AG04449 (cell line): ENCODE measurements at regions of chr2 and their contacts with region 1.

Region 1: DNA sequence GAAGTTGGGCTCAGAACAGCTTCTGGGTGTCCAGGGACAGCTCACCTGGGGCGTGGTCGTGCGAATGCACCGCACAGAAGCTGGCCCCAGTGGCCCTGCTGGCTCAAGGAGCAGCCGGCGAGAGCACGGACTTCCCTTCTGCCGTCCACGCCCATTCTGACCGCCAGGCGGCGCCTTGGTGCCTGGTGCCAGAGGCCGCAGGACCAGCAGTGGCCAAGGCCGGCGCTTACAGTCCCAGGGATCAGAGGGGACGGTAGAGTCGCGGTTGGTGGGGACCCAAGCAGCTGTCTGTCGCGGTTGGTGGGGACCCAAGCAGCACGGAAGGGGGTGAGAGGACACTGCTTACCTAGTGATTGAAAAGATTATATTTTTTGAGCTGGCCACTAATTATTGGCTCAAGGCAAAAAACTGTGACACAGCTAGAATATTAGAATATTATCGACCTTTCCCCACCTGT is 25.7 kb downstream of the NPPC start:
- DNase-seq: no peak
- H3K4me3 ChIP-seq: no peak overlapping the region
- CTCF ChIP-seq: peak; percentile 97

Region 2: GRCh38 chr2:231800493-231801091 is 99.9 kb before region 1 on chr2:
- CTCF ChIA-PET with region 1: interaction called, 12 read pairs
- POLR2A ChIA-PET with region 1: no interaction called
- DNase-seq: no peak
- H3K4me3 ChIP-seq: no peak overlapping the region
- CTCF ChIP-seq: peak; percentile 55

Region 3: GRCh38 chr2:231883468-231883881 is 17.0 kb before region 1 on chr2:
- CTCF ChIA-PET with region 1: interaction called, 62 read pairs
- POLR2A ChIA-PET with region 1: no interaction called
- DNase-seq: no peak
- H3K4me3 ChIP-seq: no peak overlapping the region
- CTCF ChIP-seq: no peak

Region 4: DNA sequence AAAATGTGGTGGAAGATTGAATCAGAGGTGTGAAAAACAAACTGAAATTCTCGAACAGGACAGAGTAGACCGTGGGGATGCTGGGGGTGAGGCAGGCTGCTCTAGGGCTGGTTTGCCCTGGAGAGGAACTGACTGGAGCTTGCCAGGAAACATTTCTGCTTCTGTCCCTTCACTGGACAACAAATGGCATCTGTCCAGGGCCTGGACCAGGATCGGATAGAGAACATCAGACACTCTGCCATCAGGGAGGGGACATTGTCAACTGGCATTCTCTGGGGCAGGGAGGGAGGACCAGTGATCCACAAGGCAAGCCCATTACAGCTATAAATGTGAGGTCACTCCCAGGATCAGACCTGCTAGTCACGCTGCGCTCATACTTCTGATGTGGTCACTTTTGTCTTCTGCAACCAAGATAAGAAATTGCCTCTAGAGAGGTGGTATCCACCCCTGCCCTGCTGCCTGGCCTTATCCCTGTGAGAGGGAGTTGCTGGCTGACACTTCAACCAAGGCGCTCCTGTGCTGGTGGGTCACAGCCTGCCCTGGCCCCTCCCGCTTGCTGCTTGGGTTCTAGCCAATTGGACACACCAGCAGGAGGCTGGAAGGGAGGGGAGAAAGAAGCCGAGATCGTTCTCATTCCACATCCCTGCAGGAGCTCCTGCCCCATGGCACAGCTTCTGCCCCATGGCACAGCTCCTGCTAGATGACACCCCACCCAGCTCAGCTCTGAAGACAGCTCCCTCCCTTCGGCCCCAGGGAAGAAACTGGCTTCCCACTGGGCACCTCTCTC is 17.0 kb after region 1 on chr2:
- CTCF ChIA-PET with region 1: interaction called, 64 read pairs
- POLR2A ChIA-PET with region 1: no interaction called
- DNase-seq: no peak
- H3K4me3 ChIP-seq: no peak overlapping the region
- CTCF ChIP-seq: no peak

Region 5: GRCh38 chr2:232030229-232030628 is 129.7 kb after region 1 on chr2:
- CTCF ChIA-PET with region 1: no interaction called
- POLR2A ChIA-PET with region 1: no interaction called
- DNase-seq: no peak
- H3K4me3 ChIP-seq: no peak overlapping the region
- CTCF ChIP-seq: no peak

Region 6: GRCh38 chr2:232292395-232293154 is 392.1 kb after region 1 on chr2:
- CTCF ChIA-PET with region 1: interaction called, 12 read pairs
- POLR2A ChIA-PET with region 1: no interaction called
- DNase-seq: no peak
- H3K4me3 ChIP-seq: no peak overlapping the region
- CTCF ChIP-seq: peak; percentile 65

Region 7: GRCh38 chr2:232333361-232334270 is 433.1 kb after region 1 on chr2:
- CTCF ChIA-PET with region 1: interaction called, 222 read pairs
- POLR2A ChIA-PET with region 1: no interaction called
- DNase-seq: no peak
- H3K4me3 ChIP-seq: no peak overlapping the region
- CTCF ChIP-seq: peak; percentile 67

Region 8: DNA sequence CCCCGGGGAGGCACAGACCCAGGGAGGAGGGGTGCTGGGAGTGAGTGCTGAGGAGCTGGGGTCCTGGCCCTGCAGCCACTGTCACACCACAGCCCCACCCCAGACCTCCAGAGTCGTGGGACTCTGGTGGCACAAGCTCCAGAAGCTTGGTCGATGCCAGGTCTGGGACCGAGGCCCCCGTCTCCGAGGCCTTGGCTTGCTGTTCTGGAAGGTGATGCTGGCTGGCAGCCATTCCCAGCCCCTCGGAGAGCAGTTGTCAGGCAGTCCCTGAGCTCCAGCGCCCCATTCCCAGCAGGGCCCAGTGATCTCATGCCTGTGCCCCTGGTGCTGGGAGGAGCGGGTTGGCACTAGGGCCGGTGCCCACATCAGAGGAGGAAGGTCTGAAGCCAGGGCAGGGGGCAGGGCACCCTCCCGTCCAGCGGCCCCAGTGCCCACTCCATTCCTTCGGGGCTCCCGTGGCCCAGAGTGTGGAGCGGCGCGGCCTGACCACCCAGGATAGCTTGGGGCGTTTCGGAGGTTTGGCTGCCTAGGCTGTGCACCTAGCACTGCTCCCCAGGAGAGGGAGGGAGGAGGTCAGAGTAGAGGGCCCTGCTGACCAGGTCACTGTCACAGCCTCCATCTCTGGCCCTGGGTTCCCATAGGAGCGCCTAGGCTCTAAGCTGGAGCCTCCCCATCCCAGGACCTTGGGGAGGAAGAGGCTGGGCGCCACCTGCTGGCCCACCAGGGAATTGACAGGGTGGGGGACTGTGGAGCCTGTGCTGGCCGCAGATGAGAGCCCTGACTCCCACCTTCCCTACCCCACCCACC is 538.6 kb after region 1 on chr2:
- CTCF ChIA-PET with region 1: interaction called, 60 read pairs
- POLR2A ChIA-PET with region 1: no interaction called
- DNase-seq: no peak
- H3K4me3 ChIP-seq: no peak overlapping the region
- CTCF ChIP-seq: peak; percentile 11